ENCODE measurements at regions of chr17 and their contacts with region 1.

Region 1: GRCh38 chr17:64984851-64985521 is 65.7 kb upstream of the LRRC37A3 start:
- DNase-seq: peak; percentile 22 to 92 (median 54)
- ATAC-seq: peak; percentile 58
- H3K4me3 ChIP-seq: peak overlapping the region; percentile 1
- H3K4me3 Mint-ChIP-seq: peak overlapping the region; percentile 80
- H3K27ac ChIP-seq: peak overlapping the region; percentile 93 to 94
- H3K27ac Mint-ChIP-seq: peak overlapping the region; percentile 98
- H3K4me1 ChIP-seq: peaks cover 40% of the 10 kb centered on the region
- H3K4me1 Mint-ChIP-seq: peaks cover 43% of the 10 kb centered on the region
- H3K27me3 ChIP-seq: no peaks in the 10 kb centered on the region
- H3K27me3 Mint-ChIP-seq: no peaks in the 10 kb centered on the region
- CTCF ChIP-seq: no peak

Region 2: DNA sequence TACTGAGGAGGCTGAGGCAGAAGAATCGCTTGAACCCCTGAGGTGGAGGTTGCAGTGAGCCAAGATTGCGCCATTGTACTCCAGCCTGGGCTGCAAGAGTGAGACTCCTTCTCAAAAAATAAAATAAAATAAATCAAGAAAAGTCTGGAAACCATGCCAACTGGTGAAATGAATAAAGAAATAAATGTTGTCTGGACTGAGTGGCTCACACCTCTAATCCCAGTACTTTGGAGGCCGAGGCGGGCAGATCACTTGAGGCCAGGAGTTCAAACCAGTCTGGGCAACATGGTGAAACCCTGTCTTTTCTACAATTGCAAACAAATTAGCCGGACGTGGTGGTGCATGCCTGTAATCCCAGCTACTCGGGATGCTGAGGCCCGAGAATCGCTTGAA is 65.0 kb before region 1 on chr17:
- CTCF ChIA-PET with region 1: interaction called, 5 read pairs
- POLR2A ChIA-PET with region 1: interaction called, 13 read pairs
- intact Hi-C with region 1: no loop called
- DNase-seq: peak in 2 of 14 experiments; percentile 14 to 39
- ATAC-seq: no peak
- H3K4me3 ChIP-seq: peak overlapping the region; percentile 60
- H3K4me3 Mint-ChIP-seq: peak overlapping the region; percentile 91
- H3K27ac ChIP-seq: peak overlapping the region in 1 of 2 donors; percentile 65
- H3K27ac Mint-ChIP-seq: peak overlapping the region; percentile 83
- H3K4me1 ChIP-seq: peaks cover 13% of the 10 kb centered on the region
- H3K4me1 Mint-ChIP-seq: no peaks in the 10 kb centered on the region
- H3K27me3 ChIP-seq: no peaks in the 10 kb centered on the region
- H3K27me3 Mint-ChIP-seq: no peaks in the 10 kb centered on the region
- CTCF ChIP-seq: no peak

Region 3: GRCh38 chr17:64968652-64969501 is 16.1 kb before region 1 on chr17:
- CTCF ChIA-PET with region 1: interaction called, 3 read pairs
- POLR2A ChIA-PET with region 1: interaction called, 117 read pairs
- intact Hi-C with region 1: no loop called
- DNase-seq: peak in 3 of 14 experiments; percentile 50 to 78 (median 62)
- ATAC-seq: peak; percentile 15
- H3K4me3 ChIP-seq: no peak overlapping the region
- H3K4me3 Mint-ChIP-seq: peak overlapping the region; percentile 76
- H3K27ac ChIP-seq: peak overlapping the region; percentile 48 to 57
- H3K27ac Mint-ChIP-seq: peak overlapping the region; percentile 88
- H3K4me1 ChIP-seq: peaks cover 45% of the 10 kb centered on the region
- H3K4me1 Mint-ChIP-seq: peaks cover 77% of the 10 kb centered on the region
- H3K27me3 ChIP-seq: no peaks in the 10 kb centered on the region
- H3K27me3 Mint-ChIP-seq: no peaks in the 10 kb centered on the region
- CTCF ChIP-seq: no peak

Region 4: DNA sequence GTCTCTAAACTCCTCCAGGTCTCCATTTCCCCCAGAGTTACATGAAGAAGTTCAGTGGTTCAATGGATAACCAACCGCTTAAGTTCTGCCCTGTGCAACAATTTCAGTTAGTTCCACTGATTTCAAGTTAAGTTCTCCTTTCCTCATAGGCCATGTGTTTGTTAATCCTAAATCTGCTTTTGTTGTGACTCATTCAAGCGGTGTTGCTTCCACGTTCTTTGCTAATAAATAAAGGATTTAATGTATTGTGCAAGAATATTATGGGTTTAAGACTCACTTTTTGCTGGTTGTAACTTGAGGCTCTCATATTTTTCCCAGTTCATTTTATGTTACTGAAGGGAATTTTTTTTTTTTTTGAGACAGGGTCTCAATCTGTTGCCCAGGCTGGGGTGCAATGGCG is 35.3 kb after region 1 on chr17:
- CTCF ChIA-PET with region 1: no interaction called
- POLR2A ChIA-PET with region 1: interaction called, 6 read pairs
- intact Hi-C with region 1: loop called in 1 of 2 experiments (anchors 2 kb)
- DNase-seq: peak in 2 of 14 experiments; percentile 32 to 44
- ATAC-seq: no peak
- H3K4me3 ChIP-seq: no peak overlapping the region
- H3K4me3 Mint-ChIP-seq: no peak overlapping the region
- H3K27ac ChIP-seq: no peak overlapping the region
- H3K27ac Mint-ChIP-seq: peak overlapping the region; percentile 2
- H3K4me1 ChIP-seq: peaks cover 32% of the 10 kb centered on the region
- H3K4me1 Mint-ChIP-seq: peaks cover 90% of the 10 kb centered on the region
- H3K27me3 ChIP-seq: no peaks in the 10 kb centered on the region
- H3K27me3 Mint-ChIP-seq: no peaks in the 10 kb centered on the region
- CTCF ChIP-seq: no peak

Region 5: DNA sequence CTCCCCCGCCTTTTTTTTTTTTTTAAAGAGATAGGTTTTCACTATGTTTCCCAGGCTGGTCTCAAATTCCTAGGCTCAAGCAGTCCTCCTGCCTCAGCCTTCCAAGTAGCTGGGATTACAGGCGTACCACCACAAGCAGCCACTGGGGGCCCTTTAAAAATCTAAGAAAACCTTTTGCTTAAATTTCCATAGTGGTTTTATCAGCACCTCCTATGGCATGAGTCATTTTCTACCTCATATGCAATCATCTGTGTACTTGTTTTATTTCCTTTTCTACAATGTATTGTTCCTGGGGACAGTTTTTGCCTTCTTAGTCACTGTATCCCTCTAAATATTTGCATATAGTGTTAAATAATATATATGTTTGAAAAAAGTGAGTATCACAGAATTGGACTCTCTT is 42.3 kb after region 1 on chr17:
- CTCF ChIA-PET with region 1: interaction called, 5 read pairs
- POLR2A ChIA-PET with region 1: interaction called, 7 read pairs
- intact Hi-C with region 1: loop called in 1 of 2 experiments (anchors 1 kb)
- DNase-seq: peak in 11 of 14 experiments; percentile 21 to 82 (median 42)
- ATAC-seq: peak; percentile 77
- H3K4me3 ChIP-seq: no peak overlapping the region
- H3K4me3 Mint-ChIP-seq: peak overlapping the region; percentile 81
- H3K27ac ChIP-seq: no peak overlapping the region
- H3K27ac Mint-ChIP-seq: peak overlapping the region; percentile 61
- H3K4me1 ChIP-seq: peaks cover 48% of the 10 kb centered on the region
- H3K4me1 Mint-ChIP-seq: peaks cover 94% of the 10 kb centered on the region
- H3K27me3 ChIP-seq: no peaks in the 10 kb centered on the region
- H3K27me3 Mint-ChIP-seq: no peaks in the 10 kb centered on the region
- CTCF ChIP-seq: peak; percentile 29

Measured in CD4-positive, alpha-beta T cell (primary cell).